ENCODE measurements at regions of chr18 and their contacts with region 1.

Region 1: GRCh38 chr18:48951448-48952286 is 902 bp upstream of the SMAD7 start:
- DNase-seq: peak; percentile 67
- H3K4me3 Mint-ChIP-seq: peak overlapping the region; percentile 93
- H3K27ac Mint-ChIP-seq: peak overlapping the region; percentile 94
- H3K4me1 Mint-ChIP-seq: peaks cover 40% of the 10 kb centered on the region
- H3K27me3 Mint-ChIP-seq: peaks cover 9% of the 10 kb centered on the region

Region 2: DNA sequence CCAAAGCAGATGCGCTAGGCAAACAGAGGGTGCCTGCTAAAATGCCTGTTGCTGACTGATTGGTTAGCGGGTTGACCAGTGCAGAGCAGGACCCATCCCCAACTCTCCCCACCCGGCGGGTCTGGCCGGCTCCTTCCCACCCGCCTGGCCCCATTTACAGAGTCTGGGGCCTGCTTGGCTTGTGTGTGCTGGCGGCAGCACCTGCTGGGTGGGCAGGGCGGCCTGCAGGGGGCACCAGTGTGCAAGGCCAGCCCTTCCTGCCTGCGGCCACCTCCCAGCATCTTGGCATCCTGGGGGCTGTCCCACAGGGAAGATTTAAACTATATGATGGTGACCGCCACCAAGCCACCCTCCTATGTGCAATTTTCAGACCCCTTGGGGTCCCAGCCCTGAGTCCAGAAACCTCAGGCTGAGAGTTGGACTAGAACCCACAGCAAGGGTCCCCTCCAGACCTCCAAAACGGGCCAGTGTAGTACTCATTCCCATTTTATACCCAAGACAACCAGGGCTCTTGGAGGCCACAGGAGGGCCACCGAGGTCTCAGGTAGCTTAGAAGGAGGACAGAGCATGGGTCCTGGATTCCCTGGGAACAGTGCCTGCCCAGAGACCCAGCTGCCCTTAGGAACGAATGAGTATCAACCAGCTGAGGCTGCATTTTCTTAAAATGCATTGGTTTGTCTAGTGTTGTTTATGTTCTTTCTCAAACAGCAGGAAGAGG is 174.5 kb before region 1 on chr18:
- intact Hi-C with region 1: loop called (anchors 5 kb)
- DNase-seq: peak; percentile 43
- H3K4me3 Mint-ChIP-seq: no peak overlapping the region
- H3K27ac Mint-ChIP-seq: no peak overlapping the region
- H3K4me1 Mint-ChIP-seq: peaks cover 2% of the 10 kb centered on the region
- H3K27me3 Mint-ChIP-seq: no peaks in the 10 kb centered on the region

Region 3: GRCh38 chr18:48834413-48835031 is 117.1 kb before region 1 on chr18:
- intact Hi-C with region 1: loop called (anchors 10 kb)
- DNase-seq: peak; percentile 66
- H3K4me3 Mint-ChIP-seq: peak overlapping the region; percentile 85
- H3K27ac Mint-ChIP-seq: peak overlapping the region; percentile 98
- H3K4me1 Mint-ChIP-seq: peaks cover 62% of the 10 kb centered on the region
- H3K27me3 Mint-ChIP-seq: no peaks in the 10 kb centered on the region

Region 4: GRCh38 chr18:48940854-48941611 is 10.6 kb before region 1 on chr18:
- intact Hi-C with region 1: loop called (anchors 1 kb)
- DNase-seq: peak; percentile 78
- H3K4me3 Mint-ChIP-seq: peak overlapping the region; percentile 74
- H3K27ac Mint-ChIP-seq: peak overlapping the region; percentile 90
- H3K4me1 Mint-ChIP-seq: peaks cover 83% of the 10 kb centered on the region
- H3K27me3 Mint-ChIP-seq: no peaks in the 10 kb centered on the region

Region 5: DNA sequence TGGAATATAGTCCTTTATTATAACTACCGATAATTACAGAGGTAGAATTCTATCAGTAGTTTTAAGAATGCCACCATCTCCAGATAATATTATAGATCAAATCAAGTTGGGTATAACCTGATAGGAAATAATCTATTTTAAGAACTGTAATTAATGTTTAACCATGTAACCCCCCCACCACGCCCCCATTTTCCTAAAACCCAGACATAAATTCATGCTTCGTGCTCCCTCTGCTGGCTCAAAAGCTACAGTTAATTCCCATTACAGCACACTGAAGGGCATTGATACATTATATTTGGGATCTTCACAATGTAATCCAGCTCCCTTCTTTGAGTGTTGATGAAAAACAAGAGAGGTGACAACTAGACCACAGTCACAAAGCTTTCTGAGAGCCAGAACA is 227.1 kb after region 1 on chr18:
- intact Hi-C with region 1: loop called (anchors 5 kb)
- DNase-seq: no peak
- H3K4me3 Mint-ChIP-seq: no peak overlapping the region
- H3K27ac Mint-ChIP-seq: no peak overlapping the region
- H3K4me1 Mint-ChIP-seq: peaks cover 26% of the 10 kb centered on the region
- H3K27me3 Mint-ChIP-seq: peaks cover 12% of the 10 kb centered on the region